ENCODE measurements at regions of chr3 and their contacts with region 1.

Region 1: GRCh38 chr3:4320096-4320911 is 17.1 kb downstream of the SETMAR start:
- DNase-seq: no peak
- ATAC-seq: no peak
- H3K4me3 ChIP-seq: no peak overlapping the region
- H3K4me3 Mint-ChIP-seq: no peak overlapping the region
- H3K27ac ChIP-seq: no peak overlapping the region
- H3K27ac Mint-ChIP-seq: no peak overlapping the region
- H3K4me1 ChIP-seq: no peaks in the 10 kb centered on the region
- H3K4me1 Mint-ChIP-seq: peaks cover 0 to 20% (median 0%) of the 10 kb centered on the region in 3 donors
- H3K27me3 ChIP-seq: no peaks in the 10 kb centered on the region
- H3K27me3 Mint-ChIP-seq: no peaks in the 10 kb centered on the region

Region 2: GRCh38 chr3:4279516-4280105 is 40.7 kb before region 1 on chr3:
- CTCF ChIA-PET with region 1: no interaction called
- POLR2A ChIA-PET with region 1: no interaction called
- DNase-seq: no peak
- ATAC-seq: no peak
- H3K4me3 ChIP-seq: no peak overlapping the region
- H3K4me3 Mint-ChIP-seq: no peak overlapping the region
- H3K27ac ChIP-seq: no peak overlapping the region
- H3K27ac Mint-ChIP-seq: no peak overlapping the region
- H3K4me1 ChIP-seq: no peaks in the 10 kb centered on the region
- H3K4me1 Mint-ChIP-seq: no peaks in the 10 kb centered on the region
- H3K27me3 ChIP-seq: no peaks in the 10 kb centered on the region
- H3K27me3 Mint-ChIP-seq: no peaks in the 10 kb centered on the region

Region 3: GRCh38 chr3:4409415-4409814 is 89.1 kb after region 1 on chr3:
- CTCF ChIA-PET with region 1: no interaction called
- POLR2A ChIA-PET with region 1: interaction called in 1 of 2 experiments, 18 read pairs
- DNase-seq: no peak
- ATAC-seq: no peak
- H3K4me3 ChIP-seq: no peak overlapping the region
- H3K4me3 Mint-ChIP-seq: no peak overlapping the region
- H3K27ac ChIP-seq: no peak overlapping the region
- H3K27ac Mint-ChIP-seq: peak overlapping the region; percentile 28 to 79
- H3K4me1 ChIP-seq: no peaks in the 10 kb centered on the region
- H3K4me1 Mint-ChIP-seq: peaks cover 0 to 23% (median 21%) of the 10 kb centered on the region in 3 donors
- H3K27me3 ChIP-seq: no peaks in the 10 kb centered on the region
- H3K27me3 Mint-ChIP-seq: no peaks in the 10 kb centered on the region